Aorta (tissue), 5 donors: ENCODE measurements at regions of chr12 and their contacts with region 1.

Region 1: GRCh38 chr12:55707841-55708694 is at the start of gene ITGA7:
- DNase-seq: peak; percentile 90 to 98
- ATAC-seq: peak; percentile 83
- H3K4me3 ChIP-seq: peak within 1 kb of the TSS; percentile 54 to 84
- H3K27ac ChIP-seq: peak within 1 kb of the TSS; percentile 73 to 86
- H3K4me1 ChIP-seq: peaks cover 0 to 7% of the 10 kb centered on the region in 2 donors
- H3K27me3 ChIP-seq: no peaks in the 10 kb centered on the region
- total RNA-seq, gene ITGA7: 463 to 747 TPM

Region 2: DNA sequence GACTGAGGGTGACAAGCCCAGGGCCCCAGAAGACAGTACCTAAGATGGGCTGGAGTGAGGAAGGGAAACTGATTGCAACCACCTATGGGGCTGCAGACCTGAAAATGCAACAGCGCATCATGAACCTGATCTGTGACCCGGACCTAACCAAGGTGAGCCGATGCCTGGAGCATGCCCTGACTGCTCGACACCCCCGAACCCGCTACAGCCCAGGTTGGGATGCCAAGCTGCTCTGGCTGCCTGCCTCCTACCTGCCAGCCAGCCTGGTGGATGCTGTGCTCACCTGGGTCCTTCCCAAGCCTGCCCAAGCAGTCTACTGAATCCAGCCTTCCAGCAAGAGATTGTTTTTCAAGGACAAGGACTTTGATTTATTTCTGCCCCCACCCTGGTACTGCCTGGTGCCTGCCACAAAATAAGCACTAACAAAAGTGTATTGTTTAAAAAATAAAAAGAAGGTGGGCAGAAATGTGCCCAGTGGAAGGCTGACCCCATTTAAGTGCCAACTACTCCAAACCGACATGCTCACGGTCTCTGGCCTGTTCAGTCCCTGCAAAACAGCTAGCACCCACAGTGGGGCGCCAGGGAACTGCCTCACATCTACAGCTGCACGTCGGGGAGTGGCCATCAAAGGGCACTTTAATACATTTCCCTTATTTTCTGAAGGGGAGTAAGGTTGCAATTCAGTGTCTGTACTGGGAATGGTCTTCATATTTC is 16.3 kb after region 1 on chr12:
- intact Hi-C with region 1: loop called in 1 of 2 experiments (anchors 2 kb)
- DNase-seq: peak; percentile 76 to 87
- ATAC-seq: no peak
- H3K4me3 ChIP-seq: no peak overlapping the region
- H3K27ac ChIP-seq: no peak overlapping the region
- H3K4me1 ChIP-seq: no peaks in the 10 kb centered on the region
- H3K27me3 ChIP-seq: no peaks in the 10 kb centered on the region